Activated T-helper 1 cell treated with anti-CD3 and anti-CD28 coated beads, Interleukin-12 subunit alpha, Interleukin-12 subunit beta, Interleukin-2, Interleukin-4 antibody, amounts not matched to agents 30 ng/mL and 10 ng/mL and 1 ng/mL, durations not matched to agents 14 hours and 24 hours and 36 hours (primary cell): ENCODE measurements at regions of chr1 and their contacts with region 1.

Region 1: GRCh38 chr1:43389326-43390313 is at the starts of genes MED8 and SZT2:
- DNase-seq: peak; percentile 93
- H3K4me3 Mint-ChIP-seq: peak within 1 kb of the TSS; percentile 99
- H3K27ac Mint-ChIP-seq: peak within 1 kb of the TSS; percentile 92
- H3K4me1 Mint-ChIP-seq: peaks cover 40% of the 10 kb centered on the region
- H3K27me3 Mint-ChIP-seq: no peaks in the 10 kb centered on the region
- total RNA-seq, gene MED8: 43.0 and 48.5 TPM in 2 replicates
- total RNA-seq, gene SZT2: 59.2 and 64.5 TPM in 2 replicates

Region 2: DNA sequence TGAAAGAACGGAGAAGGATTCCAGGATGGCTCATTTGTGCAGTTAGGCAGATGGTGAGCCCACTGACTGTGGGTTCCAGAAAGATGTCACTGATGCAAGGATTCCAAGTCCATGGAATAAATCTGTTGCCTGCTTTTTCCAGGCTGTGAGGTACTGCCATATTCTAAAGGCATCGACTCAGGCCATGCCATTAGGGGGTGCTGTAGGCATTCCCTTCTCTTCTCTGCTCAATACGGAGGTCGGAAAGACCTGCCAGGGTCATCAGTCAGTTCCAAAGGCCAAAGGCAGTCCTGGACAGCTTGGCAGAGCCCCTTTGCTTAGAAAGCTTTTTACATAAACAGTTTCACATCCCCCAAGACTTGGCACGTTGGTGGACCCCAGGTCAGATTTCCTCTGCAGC is 151.5 kb before region 1 on chr1:
- intact Hi-C with region 1: loop called (anchors 1 kb)
- DNase-seq: peak; percentile 13
- H3K4me3 Mint-ChIP-seq: no peak overlapping the region
- H3K27ac Mint-ChIP-seq: peak overlapping the region; percentile 30
- H3K4me1 Mint-ChIP-seq: peaks cover 17% of the 10 kb centered on the region
- H3K27me3 Mint-ChIP-seq: peaks cover 2% of the 10 kb centered on the region

Region 3: DNA sequence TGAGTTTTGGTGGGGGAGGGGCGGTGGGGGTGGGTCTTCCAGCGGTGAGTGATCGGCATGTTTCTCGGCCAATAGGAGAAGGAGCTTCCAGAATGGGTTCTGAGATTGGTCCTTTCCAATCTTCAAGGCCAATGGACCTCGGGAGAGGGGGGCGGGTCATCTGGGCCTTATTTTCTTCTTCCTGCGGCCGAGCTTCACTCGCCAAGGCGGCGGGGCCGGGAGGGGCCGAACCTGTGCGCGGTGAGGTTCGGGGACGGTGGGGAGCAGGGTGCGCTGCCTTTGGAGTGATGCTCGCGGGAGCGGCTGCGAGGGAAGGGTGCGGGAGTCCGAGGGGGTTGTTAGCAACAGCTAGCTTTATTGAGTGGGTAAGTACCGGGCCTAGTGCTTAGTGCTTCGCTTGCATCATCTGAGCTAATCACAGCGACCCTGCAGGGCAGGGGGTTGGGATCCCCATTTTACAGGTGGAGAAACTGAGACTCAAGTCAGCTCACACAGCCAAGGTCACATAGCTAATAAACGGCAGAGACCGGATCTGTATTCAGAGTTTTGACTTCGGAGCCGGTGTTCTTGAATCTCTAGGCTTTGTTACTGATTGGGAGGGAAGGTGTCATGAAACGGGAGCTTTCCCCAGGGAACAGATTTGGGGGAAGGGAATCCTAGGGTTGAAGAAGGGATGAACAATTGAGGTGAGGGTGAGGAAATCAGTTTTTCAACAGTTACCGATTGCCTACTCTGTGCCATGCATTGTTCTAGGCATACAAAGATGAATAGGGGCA is 260.9 kb after region 1 on chr1:
- intact Hi-C with region 1: loop called (anchors 1 kb)
- DNase-seq: peak; percentile 89
- H3K4me3 Mint-ChIP-seq: peak overlapping the region; percentile 98
- H3K27ac Mint-ChIP-seq: peak overlapping the region; percentile 98
- H3K4me1 Mint-ChIP-seq: peaks cover 27% of the 10 kb centered on the region
- H3K27me3 Mint-ChIP-seq: peaks cover under 1% of the 10 kb centered on the region